ENCODE measurements at regions of chr16 and their contacts with region 1.

Region 1: GRCh38 chr16:46658925-46659324 is 30.1 kb downstream of the VPS35 start:
- DNase-seq: no peak
- H3K4me3 ChIP-seq: no peak overlapping the region
- H3K27ac ChIP-seq: no peak overlapping the region
- H3K4me1 ChIP-seq: no peaks in the 10 kb centered on the region
- H3K27me3 ChIP-seq: no peaks in the 10 kb centered on the region
- CTCF ChIP-seq: no peak
- POLR2A ChIP-seq: no peak

Region 2: GRCh38 chr16:46673320-46674013 is 14.5 kb after region 1 on chr16:
- CTCF ChIA-PET with region 1: interaction called, 17 read pairs
- POLR2A ChIA-PET with region 1: no interaction called
- dilution Hi-C with region 1: no loop called
- intact Hi-C with region 1: no loop called
- DNase-seq: peak; percentile 62
- H3K4me3 ChIP-seq: no peak overlapping the region
- H3K27ac ChIP-seq: no peak overlapping the region
- H3K4me1 ChIP-seq: no peaks in the 10 kb centered on the region
- H3K27me3 ChIP-seq: no peaks in the 10 kb centered on the region
- CTCF ChIP-seq: peak; percentile 85 to 91
- POLR2A ChIP-seq: no peak

Measured in endothelial cell of umbilical vein (primary cell).